ENCODE measurements at regions of chr1 and their contacts with region 1.

Region 1: DNA sequence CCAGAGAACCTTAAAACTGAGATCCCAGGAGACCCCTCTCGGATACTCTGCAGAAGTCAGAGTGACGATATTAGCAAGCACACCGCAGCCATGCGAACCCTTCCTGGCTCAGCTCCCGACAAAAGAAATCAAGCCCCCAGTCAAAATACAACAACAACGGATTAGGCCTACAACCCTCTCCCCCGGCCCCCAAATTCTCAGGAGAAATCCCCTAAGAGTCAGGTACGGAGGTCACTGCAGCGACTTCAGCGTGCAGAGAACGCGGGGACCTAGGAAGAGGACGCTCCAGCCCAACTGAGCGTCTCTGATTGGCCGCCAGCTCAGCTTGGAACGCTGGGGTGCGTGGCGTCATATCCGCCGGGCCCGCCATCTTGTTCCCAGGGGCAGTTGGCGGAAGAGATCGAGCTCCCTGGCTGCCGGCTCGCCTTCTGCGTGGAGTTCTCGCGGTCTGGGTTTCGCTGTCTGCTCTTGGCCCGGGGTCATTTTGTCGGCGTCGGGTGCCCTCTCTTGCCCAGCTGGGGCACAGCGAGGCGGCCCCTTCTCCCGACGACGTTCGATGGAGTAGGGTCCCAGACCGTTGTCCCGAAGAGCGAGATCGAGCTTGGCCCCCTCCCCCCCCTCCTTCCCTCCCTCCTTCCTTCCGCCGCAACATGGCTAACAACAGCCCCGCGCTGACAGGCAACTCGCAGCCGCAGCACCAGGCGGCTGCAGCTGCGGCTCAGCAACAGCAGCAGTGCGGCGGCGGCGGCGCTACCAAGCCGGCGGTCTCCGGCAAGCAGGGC is at the start of gene PRPF38B:
- DNase-seq: peak; percentile 92 to 99 (median 97)

Region 2: GRCh38 chr1:108661030-108661620 is 31.0 kb before region 1 on chr1 and contains the start of gene HENMT1:
- intact Hi-C with region 1: loop called (anchors 2 kb)
- DNase-seq: peak; percentile 20 to 82 (median 68)

Region 3: DNA sequence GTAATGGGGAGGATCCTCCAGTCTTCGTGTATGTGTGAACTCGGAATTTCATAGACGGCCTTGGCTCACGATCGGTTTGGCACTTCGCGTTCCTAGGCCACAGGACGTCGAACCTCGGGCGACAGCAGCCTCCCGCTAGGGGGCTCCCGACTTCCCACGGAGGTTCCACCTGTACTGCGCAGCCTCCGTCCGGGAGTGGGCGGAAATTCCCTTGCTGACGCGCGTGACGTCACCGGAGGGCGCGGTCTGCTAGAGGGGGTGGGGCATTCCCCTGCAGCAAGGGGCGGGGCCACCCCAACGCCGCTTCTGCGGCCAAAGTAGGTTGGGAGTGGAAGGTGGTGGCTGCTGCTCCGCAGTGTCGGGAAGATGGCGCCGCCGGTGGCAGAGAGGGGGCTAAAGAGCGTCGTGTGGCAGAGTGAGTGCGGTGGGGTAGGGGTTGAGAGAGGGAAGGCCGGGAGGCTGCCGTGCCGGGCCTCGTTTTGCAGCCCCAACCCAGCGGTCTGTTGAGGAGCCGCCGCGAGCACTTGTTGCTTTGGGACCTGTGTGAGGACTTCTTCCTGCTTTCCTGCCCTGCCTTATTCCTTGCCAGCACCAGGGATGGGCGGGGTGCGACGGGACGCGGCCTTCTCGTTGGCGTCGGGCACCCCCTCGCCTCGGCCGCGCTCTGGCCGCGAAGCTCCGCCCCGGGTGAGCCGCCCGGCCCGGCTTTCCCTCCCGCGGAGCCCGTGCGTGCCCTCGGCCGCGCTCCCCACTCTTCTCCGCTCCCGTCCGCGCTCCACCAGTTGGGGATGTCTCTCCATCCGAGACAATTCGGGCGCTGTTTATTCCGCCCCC is 54.5 kb after region 1 on chr1 and contains the start of gene STXBP3:
- intact Hi-C with region 1: loop called (anchors 2 kb)
- DNase-seq: peak; percentile 97 to 100 (median 99)